ENCODE measurements at regions of chr6 and their contacts with region 1.

Region 1: GRCh38 chr6:134097114-134097707 is 44.8 kb upstream of the SLC2A12 start:
- DNase-seq: peak; percentile 65
- ATAC-seq: peak; percentile 73
- H3K4me3 Mint-ChIP-seq: no peak overlapping the region
- H3K27ac Mint-ChIP-seq: no peak overlapping the region
- H3K4me1 Mint-ChIP-seq: peaks cover 6% of the 10 kb centered on the region; the same call in 1 of the 2 replicates
- H3K27me3 Mint-ChIP-seq: no peaks in the 10 kb centered on the region
- CTCF ChIP-seq: peak; percentile 52

Region 2: DNA sequence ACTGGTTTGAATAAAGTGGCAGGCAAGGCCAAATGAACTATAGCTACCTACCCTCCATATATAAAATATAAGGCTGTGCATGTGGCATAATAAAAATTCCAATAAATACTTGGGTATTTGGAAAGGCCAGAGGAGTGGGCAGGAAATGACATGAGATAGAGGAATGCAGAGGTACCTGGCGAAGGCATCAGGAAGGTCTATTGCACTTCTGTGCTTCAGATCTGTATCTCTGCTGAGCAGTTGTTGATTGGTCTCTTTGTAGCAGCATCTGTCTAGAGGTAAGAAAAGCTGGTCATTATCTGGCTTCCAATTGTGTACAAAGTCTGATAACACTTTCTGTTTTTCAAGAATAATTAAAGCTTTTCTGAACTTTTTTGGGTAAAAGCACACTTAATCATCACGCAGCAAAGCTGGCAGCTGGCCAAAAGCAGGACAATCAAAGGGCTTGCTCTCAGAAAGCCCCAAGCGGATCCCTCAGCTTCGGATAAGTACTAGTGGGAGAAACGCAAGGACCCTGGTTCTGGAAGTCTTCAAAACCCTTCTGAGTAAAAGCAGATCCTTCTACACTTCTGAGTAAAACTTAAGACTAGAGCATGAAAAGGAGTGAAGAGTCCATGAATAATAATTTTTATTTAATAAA is 328.4 kb before region 1 on chr6:
- CTCF ChIA-PET with region 1: no interaction called
- POLR2A ChIA-PET with region 1: no interaction called
- DNase-seq: no peak
- ATAC-seq: no peak
- H3K4me3 Mint-ChIP-seq: no peak overlapping the region
- H3K27ac Mint-ChIP-seq: no peak overlapping the region
- H3K4me1 Mint-ChIP-seq: peaks cover 11% of the 10 kb centered on the region
- H3K27me3 Mint-ChIP-seq: no peaks in the 10 kb centered on the region
- CTCF ChIP-seq: no peak

Region 3: GRCh38 chr6:133837801-133838349 is 259.3 kb before region 1 on chr6:
- CTCF ChIA-PET with region 1: interaction called, 10 read pairs
- POLR2A ChIA-PET with region 1: no interaction called
- DNase-seq: peak; percentile 90
- ATAC-seq: peak; percentile 96
- H3K4me3 Mint-ChIP-seq: peak overlapping the region; percentile 66
- H3K27ac Mint-ChIP-seq: peak overlapping the region; percentile 91
- H3K4me1 Mint-ChIP-seq: peaks cover 26% of the 10 kb centered on the region
- H3K27me3 Mint-ChIP-seq: no peaks in the 10 kb centered on the region
- CTCF ChIP-seq: peak; percentile 90

Region 4: DNA sequence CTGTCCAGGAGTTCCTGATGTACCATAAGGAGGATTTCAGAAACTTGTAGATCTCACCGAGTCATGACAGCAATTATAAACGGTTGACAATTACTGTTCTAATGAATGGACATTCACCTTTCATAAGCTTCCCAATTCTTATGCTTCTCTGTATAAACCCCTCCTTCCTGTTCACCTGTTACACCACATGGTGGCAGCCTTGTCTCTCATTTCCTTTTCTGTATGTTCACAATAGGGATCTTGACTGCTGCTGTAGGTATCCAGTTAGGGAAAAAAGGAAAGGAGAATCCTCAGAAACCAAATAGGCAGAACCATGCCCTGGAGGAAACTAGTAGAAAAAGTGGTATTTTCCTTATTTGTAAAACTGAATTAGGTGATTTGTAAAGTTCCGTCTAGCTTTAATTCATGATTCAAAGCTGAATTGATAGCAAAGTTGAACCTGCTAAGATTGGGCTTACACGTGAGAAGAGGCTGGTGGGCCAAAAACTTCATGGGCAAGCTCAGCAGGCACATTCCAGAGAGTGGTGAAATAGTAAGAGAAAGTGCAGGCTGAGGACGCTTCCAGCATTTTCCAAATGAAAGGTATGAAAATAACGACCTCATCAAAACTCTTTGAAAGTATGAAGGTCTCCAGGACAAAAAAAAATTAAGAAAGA is 173.1 kb before region 1 on chr6:
- CTCF ChIA-PET with region 1: interaction called, 340 read pairs
- POLR2A ChIA-PET with region 1: interaction called, 3 read pairs
- DNase-seq: peak; percentile 65
- ATAC-seq: peak; percentile 93
- H3K4me3 Mint-ChIP-seq: peak overlapping the region; percentile 53
- H3K27ac Mint-ChIP-seq: no peak overlapping the region; the same call in 1 of the 2 replicates
- H3K4me1 Mint-ChIP-seq: peaks cover 11% of the 10 kb centered on the region
- H3K27me3 Mint-ChIP-seq: no peaks in the 10 kb centered on the region
- CTCF ChIP-seq: peak; percentile 62

Region 5: GRCh38 chr6:133973109-133973971 is 123.9 kb before region 1 on chr6:
- CTCF ChIA-PET with region 1: interaction called, 58 read pairs
- POLR2A ChIA-PET with region 1: no interaction called
- DNase-seq: no peak
- ATAC-seq: peak; percentile 61
- H3K4me3 Mint-ChIP-seq: no peak overlapping the region
- H3K27ac Mint-ChIP-seq: peak overlapping the region; percentile 58; the same call in 1 of the 2 replicates
- H3K4me1 Mint-ChIP-seq: peaks cover 47% of the 10 kb centered on the region
- H3K27me3 Mint-ChIP-seq: no peaks in the 10 kb centered on the region
- CTCF ChIP-seq: peak; percentile 45

Region 6: DNA sequence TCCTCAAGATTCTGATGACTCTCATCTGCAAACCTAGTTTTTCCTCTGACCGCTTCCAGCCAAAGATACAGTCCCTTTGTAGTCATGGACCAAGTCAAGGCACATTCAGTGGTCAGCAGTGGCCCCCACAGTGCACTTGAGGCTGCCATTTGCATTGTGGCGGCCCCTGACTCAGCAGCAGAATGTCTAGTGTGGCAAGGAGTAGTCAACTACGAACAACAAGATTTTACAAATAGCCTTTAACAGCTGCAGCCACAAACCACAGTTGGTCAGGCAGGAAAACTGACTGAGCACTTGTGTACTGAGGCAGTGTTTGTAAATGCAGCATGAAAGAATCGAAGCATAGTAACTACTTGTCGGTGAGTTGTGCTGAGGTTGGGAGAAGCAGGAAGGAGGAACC is 94.4 kb before region 1 on chr6:
- CTCF ChIA-PET with region 1: interaction called, 10 read pairs
- POLR2A ChIA-PET with region 1: no interaction called
- DNase-seq: no peak
- ATAC-seq: no peak
- H3K4me3 Mint-ChIP-seq: no peak overlapping the region
- H3K27ac Mint-ChIP-seq: no peak overlapping the region
- H3K4me1 Mint-ChIP-seq: peaks cover 14% of the 10 kb centered on the region
- H3K27me3 Mint-ChIP-seq: no peaks in the 10 kb centered on the region
- CTCF ChIP-seq: no peak

Region 7: DNA sequence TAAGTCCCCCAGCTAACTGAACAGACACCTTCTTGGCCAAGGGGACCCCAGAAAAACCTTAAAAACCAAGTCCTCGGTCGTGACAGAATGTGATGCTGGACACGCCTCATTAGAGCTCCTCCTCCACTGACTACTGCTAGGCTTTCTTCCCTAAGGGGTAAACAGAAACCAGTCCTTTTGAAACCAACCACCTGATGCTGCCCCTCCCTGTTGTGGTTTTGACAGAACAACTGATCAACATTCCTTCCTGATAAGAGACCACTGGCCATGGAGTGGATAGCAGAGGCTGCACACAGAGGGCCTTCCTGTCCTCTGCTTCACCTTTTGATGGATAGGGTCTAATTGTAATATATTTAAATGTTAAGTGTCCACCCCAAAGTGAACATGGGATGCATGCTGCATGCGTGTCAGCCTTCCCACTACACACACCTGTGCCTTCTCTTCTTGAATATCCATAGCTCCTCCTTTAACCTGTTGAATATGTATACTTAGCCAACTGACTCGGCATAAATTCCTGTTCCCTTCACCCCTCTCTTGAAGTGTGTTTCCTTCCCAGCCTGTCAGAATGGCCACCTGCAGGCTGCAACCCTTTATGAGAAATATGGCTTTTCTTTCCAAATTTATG is 16.9 kb before region 1 on chr6:
- CTCF ChIA-PET with region 1: interaction called, 10 read pairs
- POLR2A ChIA-PET with region 1: no interaction called
- DNase-seq: no peak
- ATAC-seq: 0 out of 2 replicates have a peak, but pooled peaks have one; percentile 34
- H3K4me3 Mint-ChIP-seq: no peak overlapping the region
- H3K27ac Mint-ChIP-seq: no peak overlapping the region
- H3K4me1 Mint-ChIP-seq: peaks cover 3% of the 10 kb centered on the region
- H3K27me3 Mint-ChIP-seq: no peaks in the 10 kb centered on the region
- CTCF ChIP-seq: no peak

Region 8: GRCh38 chr6:134132494-134133141 is 35.4 kb after region 1 on chr6:
- CTCF ChIA-PET with region 1: no interaction called
- POLR2A ChIA-PET with region 1: no interaction called
- DNase-seq: no peak
- ATAC-seq: no peak
- H3K4me3 Mint-ChIP-seq: no peak overlapping the region
- H3K27ac Mint-ChIP-seq: no peak overlapping the region
- H3K4me1 Mint-ChIP-seq: no peaks in the 10 kb centered on the region
- H3K27me3 Mint-ChIP-seq: no peaks in the 10 kb centered on the region
- CTCF ChIP-seq: no peak

Region 9: DNA sequence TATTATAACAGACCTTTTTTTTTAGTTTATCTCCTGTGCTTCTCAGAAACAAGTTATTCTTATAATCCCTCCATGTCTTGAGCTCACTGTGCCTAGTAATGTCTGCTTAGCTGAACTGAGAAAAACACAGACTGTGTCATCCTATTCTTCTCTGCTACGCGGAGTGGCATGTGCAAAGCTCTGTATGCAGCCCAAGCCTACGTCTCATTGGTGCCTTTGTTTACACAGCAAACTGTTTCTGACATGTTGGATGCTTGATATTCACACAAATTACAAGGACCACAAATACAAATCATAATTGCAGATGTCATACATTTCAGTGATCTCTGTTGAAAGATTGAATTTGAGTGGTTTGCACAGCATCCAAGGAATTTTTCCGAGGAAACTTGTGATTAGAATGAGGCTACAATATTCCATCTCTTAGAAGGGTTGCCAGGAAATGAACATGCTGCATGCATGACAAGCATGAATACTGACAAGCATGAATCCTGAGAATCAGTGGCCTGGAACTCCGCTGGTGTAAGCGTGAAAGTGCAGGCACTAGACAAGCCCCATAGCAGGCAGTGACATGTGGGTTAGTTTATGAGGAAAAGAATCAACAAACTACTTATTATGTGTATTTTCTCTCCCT is 349.1 kb after region 1 on chr6:
- CTCF ChIA-PET with region 1: no interaction called
- POLR2A ChIA-PET with region 1: no interaction called
- DNase-seq: no peak
- ATAC-seq: no peak
- H3K4me3 Mint-ChIP-seq: no peak overlapping the region
- H3K27ac Mint-ChIP-seq: no peak overlapping the region
- H3K4me1 Mint-ChIP-seq: no peaks in the 10 kb centered on the region
- H3K27me3 Mint-ChIP-seq: no peaks in the 10 kb centered on the region
- CTCF ChIP-seq: no peak

Measured in WTC11 (cell line).